IMR-90 (cell line): ENCODE measurements at regions of chr2 and their contacts with region 1.

Region 1: DNA sequence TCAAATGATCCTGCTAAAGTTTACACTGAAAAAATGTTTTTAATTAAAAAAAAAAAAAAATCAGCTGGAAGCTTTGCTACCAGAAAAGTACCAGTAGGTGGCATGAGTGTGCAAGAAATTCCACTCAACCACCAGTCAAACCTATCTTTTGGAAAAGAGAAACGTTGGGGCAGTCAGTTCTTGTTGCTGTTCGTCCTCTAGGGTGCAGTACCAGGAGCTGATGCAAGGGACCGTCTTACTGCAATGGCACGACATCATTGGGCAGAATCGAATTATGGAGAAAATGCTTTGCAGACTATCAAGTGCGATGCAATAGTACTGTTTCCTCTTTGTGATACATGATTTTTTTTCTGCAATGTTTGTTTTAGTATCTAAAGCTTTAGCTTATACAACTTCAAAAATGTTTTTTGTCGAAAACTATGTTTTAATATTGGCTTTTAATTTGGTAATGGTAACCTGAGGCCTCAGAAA is 18.3 kb downstream of the YPEL5 start:
- DNase-seq: peak; percentile 93
- ATAC-seq: peak; percentile 96
- H3K4me3 ChIP-seq: no peak overlapping the region
- H3K27ac ChIP-seq: no peak overlapping the region
- H3K4me1 ChIP-seq: peaks cover 3% of the 10 kb centered on the region; the same call in 1 of the 2 replicates
- H3K27me3 ChIP-seq: no peaks in the 10 kb centered on the region
- CTCF ChIP-seq: peak; percentile 98
- POLR2A ChIP-seq: peak; percentile 43; the same call in 1 of the 2 replicates
- RAD21 ChIP-seq: peak; percentile 84

Region 2: DNA sequence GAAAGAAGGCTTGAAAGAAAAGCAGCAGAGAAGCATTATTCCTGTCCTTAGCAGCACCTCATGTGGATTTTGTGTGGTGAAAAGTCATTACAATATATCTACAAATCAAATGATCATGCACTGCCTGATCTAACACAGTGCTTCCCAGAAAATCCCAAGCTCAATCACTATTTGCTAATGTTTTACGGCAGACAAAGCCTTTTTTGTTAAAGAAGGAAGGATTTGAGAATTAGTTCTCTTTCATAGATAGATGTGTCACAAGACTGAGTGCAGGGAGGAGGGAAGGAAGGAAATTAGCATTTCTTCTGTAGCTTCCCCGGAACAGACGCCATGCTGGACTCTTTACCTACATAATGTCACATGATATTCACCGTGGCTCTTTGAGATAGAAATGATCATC is 446.8 kb before region 1 on chr2:
- CTCF ChIA-PET with region 1: no interaction called
- POLR2A ChIA-PET with region 1: no interaction called
- dilution Hi-C with region 1: no loop called
- in situ Hi-C with region 1: no loop called
- intact Hi-C with region 1: no loop called
- DNase-seq: no peak
- ATAC-seq: no peak
- H3K4me3 ChIP-seq: no peak overlapping the region
- H3K27ac ChIP-seq: no peak overlapping the region
- H3K4me1 ChIP-seq: no peaks in the 10 kb centered on the region
- H3K27me3 ChIP-seq: peaks cover 20% of the 10 kb centered on the region
- CTCF ChIP-seq: no peak
- POLR2A ChIP-seq: no peak
- RAD21 ChIP-seq: no peak

Region 3: GRCh38 chr2:30201990-30202389 is 36.9 kb after region 1 on chr2:
- CTCF ChIA-PET with region 1: interaction called, 10 read pairs
- POLR2A ChIA-PET with region 1: no interaction called
- dilution Hi-C with region 1: no loop called
- in situ Hi-C with region 1: no loop called
- intact Hi-C with region 1: no loop called
- DNase-seq: peak; percentile 22
- ATAC-seq: peak; percentile 49; the same call in 1 of the 2 replicates
- H3K4me3 ChIP-seq: no peak overlapping the region
- H3K27ac ChIP-seq: no peak overlapping the region
- H3K4me1 ChIP-seq: no peaks in the 10 kb centered on the region
- H3K27me3 ChIP-seq: 0 out of 2 replicates have a peak, but pooled peaks cover 3% of the 10 kb centered on the region
- CTCF ChIP-seq: no peak
- POLR2A ChIP-seq: no peak
- RAD21 ChIP-seq: no peak

Region 4: DNA sequence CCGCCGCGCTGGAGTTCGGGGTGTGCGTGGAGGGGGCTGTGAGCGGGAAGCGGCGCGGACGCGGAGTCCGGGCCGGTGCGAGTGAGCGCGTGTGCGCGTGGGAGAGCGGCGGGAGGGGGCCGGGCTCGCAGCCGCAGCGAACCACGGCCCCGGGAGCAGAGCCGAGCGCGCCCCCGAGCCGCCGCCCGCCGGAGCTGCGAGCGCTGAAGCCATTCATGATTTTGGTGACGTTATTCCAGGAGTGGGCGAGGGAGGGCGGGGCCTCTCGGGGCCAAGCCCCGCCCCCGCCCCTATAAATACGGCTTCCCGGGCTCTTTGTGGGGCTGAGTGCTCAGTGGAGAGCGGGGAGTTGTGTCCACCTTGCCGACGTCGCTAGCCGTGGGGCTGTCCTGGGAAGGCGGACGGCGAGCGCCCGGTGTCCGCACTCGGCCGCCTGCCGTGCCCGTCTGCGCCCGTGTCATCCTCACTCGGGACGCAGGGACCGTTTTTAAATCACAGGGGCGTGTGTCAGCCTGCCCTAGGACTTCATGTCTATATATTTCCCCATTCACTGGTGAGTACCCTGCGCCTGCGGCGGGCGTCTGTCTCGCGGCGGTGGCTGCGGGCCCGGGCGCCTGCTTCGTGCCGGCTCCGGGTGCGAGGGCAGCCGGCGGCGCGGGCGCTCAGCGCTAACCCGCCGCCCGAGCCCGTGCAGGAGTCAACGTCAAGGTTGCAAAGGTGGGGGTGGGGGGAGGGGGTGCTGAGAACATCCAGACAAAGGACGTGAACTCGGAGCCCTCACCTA is 66.3 kb after region 1 on chr2 and contains the start of gene LBH:
- CTCF ChIA-PET with region 1: interaction called, 10 read pairs
- POLR2A ChIA-PET with region 1: no interaction called
- dilution Hi-C with region 1: no loop called
- in situ Hi-C with region 1: no loop called
- intact Hi-C with region 1: no loop called
- DNase-seq: peak; percentile 90
- ATAC-seq: peak; percentile 73
- H3K4me3 ChIP-seq: peak within 1 kb of the TSS; percentile 84
- H3K27ac ChIP-seq: peak within 1 kb of the TSS; percentile 84
- H3K4me1 ChIP-seq: peaks cover 13% of the 10 kb centered on the region
- H3K27me3 ChIP-seq: no peaks in the 10 kb centered on the region
- CTCF ChIP-seq: 0 out of 2 replicates have a peak, but pooled peaks have one; percentile 7
- POLR2A ChIP-seq: peak; percentile 100
- RAD21 ChIP-seq: no peak
- total RNA-seq, gene LBH: 155 and 158 TPM in 2 replicates

Region 5: GRCh38 chr2:30862054-30862651 is 697.1 kb after region 1 on chr2:
- CTCF ChIA-PET with region 1: interaction called, 4 read pairs
- POLR2A ChIA-PET with region 1: no interaction called
- dilution Hi-C with region 1: no loop called
- in situ Hi-C with region 1: no loop called
- intact Hi-C with region 1: loop called (anchors 1 kb)
- DNase-seq: peak; percentile 73
- ATAC-seq: peak; percentile 53
- H3K4me3 ChIP-seq: no peak overlapping the region
- H3K27ac ChIP-seq: no peak overlapping the region
- H3K4me1 ChIP-seq: no peaks in the 10 kb centered on the region
- H3K27me3 ChIP-seq: no peaks in the 10 kb centered on the region
- CTCF ChIP-seq: peak; percentile 88
- POLR2A ChIP-seq: no peak
- RAD21 ChIP-seq: peak; percentile 49

Region 6: GRCh38 chr2:31333527-31334183 is 1168.6 kb after region 1 on chr2:
- CTCF ChIA-PET with region 1: interaction called, 3 read pairs
- POLR2A ChIA-PET with region 1: no interaction called
- dilution Hi-C with region 1: no loop called
- in situ Hi-C with region 1: loop called (anchors 25 kb)
- intact Hi-C with region 1: loop called (anchors 10 kb)
- DNase-seq: peak; percentile 84
- ATAC-seq: peak; percentile 74
- H3K4me3 ChIP-seq: no peak overlapping the region
- H3K27ac ChIP-seq: no peak overlapping the region
- H3K4me1 ChIP-seq: peaks cover 17% of the 10 kb centered on the region
- H3K27me3 ChIP-seq: 0 out of 2 replicates have a peak, but pooled peaks cover 2% of the 10 kb centered on the region
- CTCF ChIP-seq: peak; percentile 99
- POLR2A ChIP-seq: no peak
- RAD21 ChIP-seq: peak; percentile 99